GM12878 (cell line): ENCODE measurements at regions of chr9 and their contacts with region 1.

Region 1: GRCh38 chr9:38154501-38155421 is 85.7 kb upstream of the SHB start:
- DNase-seq: no peak
- ATAC-seq: peak; percentile 20; the same call in 1 of the 3 replicates
- H3K4me3 ChIP-seq: no peak overlapping the region
- H3K27ac ChIP-seq: no peak overlapping the region
- H3K4me1 ChIP-seq: no peaks in the 10 kb centered on the region
- H3K27me3 ChIP-seq: no peaks in the 10 kb centered on the region; a peak in 1 of 4 replicates
- CTCF ChIP-seq: no peak
- EP300 ChIP-seq: no peak
- POLR2A ChIP-seq: no peak
- RAD21 ChIP-seq: no peak

Region 2: DNA sequence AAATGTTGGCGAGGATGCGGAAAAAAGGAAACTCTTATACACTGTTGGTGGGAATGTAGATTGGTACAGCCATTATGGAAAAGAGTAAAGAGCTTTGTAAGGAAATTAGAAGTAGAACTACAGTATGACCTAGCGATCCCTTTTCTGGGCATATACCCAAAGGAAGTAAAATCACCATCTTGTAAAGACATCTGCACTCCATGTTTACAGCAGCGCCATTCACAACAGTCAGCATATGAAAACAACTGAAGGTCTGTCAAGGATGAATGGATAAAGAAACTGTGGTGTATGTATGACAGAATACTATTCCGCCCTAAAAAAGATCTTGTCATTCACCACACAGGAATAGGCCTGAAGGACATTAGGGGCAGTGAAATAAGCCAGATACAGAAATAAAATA is 223.2 kb before region 1 on chr9:
- CTCF ChIA-PET with region 1: no interaction called
- POLR2A ChIA-PET with region 1: no interaction called
- RAD21 ChIA-PET with region 1: no interaction called
- SMC1A ChIA-PET with region 1: no interaction called
- in situ Hi-C with region 1: no loop called
- intact Hi-C with region 1: no loop called
- DNase-seq: no peak
- ATAC-seq: no peak
- H3K4me3 ChIP-seq: no peak overlapping the region
- H3K27ac ChIP-seq: no peak overlapping the region
- H3K4me1 ChIP-seq: no peaks in the 10 kb centered on the region; the same call in 1 of the 2 replicates
- H3K27me3 ChIP-seq: no peaks in the 10 kb centered on the region
- CTCF ChIP-seq: no peak
- EP300 ChIP-seq: no peak
- POLR2A ChIP-seq: no peak
- RAD21 ChIP-seq: no peak

Region 3: GRCh38 chr9:38133595-38133994 is 21.2 kb before region 1 on chr9:
- CTCF ChIA-PET with region 1: interaction called, 29 read pairs
- POLR2A ChIA-PET with region 1: interaction called, 8 read pairs
- RAD21 ChIA-PET with region 1: interaction called, 10 read pairs
- SMC1A ChIA-PET with region 1: interaction called, 51 read pairs
- in situ Hi-C with region 1: no loop called
- intact Hi-C with region 1: no loop called
- DNase-seq: no peak
- ATAC-seq: no peak
- H3K4me3 ChIP-seq: no peak overlapping the region
- H3K27ac ChIP-seq: no peak overlapping the region
- H3K4me1 ChIP-seq: peaks cover 3% of the 10 kb centered on the region; the same call in 1 of the 2 replicates
- H3K27me3 ChIP-seq: peaks cover 0 to 2% of the 10 kb centered on the region in 2 experiments; a peak in 3 of 4 replicates
- CTCF ChIP-seq: no peak
- EP300 ChIP-seq: no peak
- POLR2A ChIP-seq: no peak
- RAD21 ChIP-seq: peak; percentile 29; the same call in 1 of the 2 replicates